AG04450 (cell line): ENCODE measurements at regions of chr12 and their contacts with region 1.

Region 1: GRCh38 chr12:6904280-6905278 is at the start of gene LRRC23:
- DNase-seq: peak; percentile 83
- H3K4me3 ChIP-seq: peak within 1 kb of the TSS; percentile 96
- H3K27ac ChIP-seq: peak within 1 kb of the TSS; percentile 57
- H3K27me3 ChIP-seq: no peaks in the 10 kb centered on the region
- CTCF ChIP-seq: no peak
- polyA plus RNA-seq, gene LRRC23: 10.4 and 10.6 TPM in 2 replicates

Region 2: GRCh38 chr12:6653987-6654386 is 250.6 kb before region 1 on chr12:
- CTCF ChIA-PET with region 1: no interaction called
- POLR2A ChIA-PET with region 1: no interaction called
- DNase-seq: no peak
- H3K4me3 ChIP-seq: no peak overlapping the region
- H3K27ac ChIP-seq: no peak overlapping the region
- H3K27me3 ChIP-seq: no peaks in the 10 kb centered on the region
- CTCF ChIP-seq: no peak

Region 3: DNA sequence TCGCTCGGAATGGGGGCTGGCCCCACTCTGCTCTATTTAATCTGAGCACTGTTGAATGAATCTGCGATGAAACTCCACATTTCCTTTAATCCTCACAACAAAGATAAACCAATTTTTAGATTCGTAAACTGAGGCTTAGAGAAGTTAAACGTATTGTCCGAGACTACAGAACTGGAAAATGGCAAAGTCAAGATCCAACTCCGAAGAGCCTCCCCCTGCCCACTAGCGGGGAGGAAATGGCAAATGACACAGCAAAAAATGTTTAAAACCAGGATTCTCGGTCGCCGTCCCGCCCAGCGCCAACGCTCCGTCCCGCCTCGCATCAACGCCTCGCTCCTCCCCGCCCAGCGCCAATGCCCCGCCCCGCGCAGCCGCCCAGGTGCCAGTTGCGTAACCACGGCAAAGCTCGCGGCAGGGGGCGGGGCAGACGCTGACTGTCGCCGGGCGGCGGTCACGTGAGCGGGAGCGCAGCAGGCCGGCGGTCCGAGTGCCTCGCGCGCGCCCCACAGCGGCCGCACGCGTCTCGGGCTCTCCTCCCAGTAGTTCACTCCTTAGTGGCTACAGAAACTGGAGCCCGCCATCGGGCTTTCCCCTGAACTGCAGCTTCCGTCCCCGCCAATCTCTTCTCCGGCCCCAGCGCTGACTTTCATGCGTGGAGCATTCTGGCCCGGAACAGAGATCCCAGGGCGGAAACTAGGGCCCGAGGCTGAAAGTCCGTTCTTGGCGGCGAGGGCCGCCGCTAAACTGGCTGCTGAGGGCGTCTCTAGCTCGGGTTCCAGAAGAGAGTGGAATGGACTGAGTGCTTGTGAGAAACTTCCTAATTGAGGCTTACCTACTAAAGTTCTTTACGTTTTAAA is 13.6 kb before region 1 on chr12:
- CTCF ChIA-PET with region 1: interaction called, 21 read pairs
- POLR2A ChIA-PET with region 1: interaction called, 5 read pairs
- DNase-seq: peak; percentile 91
- H3K4me3 ChIP-seq: peak overlapping the region; percentile 59
- H3K27ac ChIP-seq: peak overlapping the region; percentile 94
- H3K27me3 ChIP-seq: no peaks in the 10 kb centered on the region
- CTCF ChIP-seq: peak; percentile 70